A673 (cell line): ENCODE measurements at regions of chr6 and their contacts with region 1.

Region 1: GRCh38 chr6:127547215-127547614 is 28.1 kb upstream of the MTCL3 start:
- DNase-seq: peak; percentile 35
- H3K4me3 ChIP-seq: no peak overlapping the region
- H3K27ac ChIP-seq: no peak overlapping the region
- H3K4me1 ChIP-seq: no peaks in the 10 kb centered on the region
- H3K27me3 ChIP-seq: no peaks in the 10 kb centered on the region
- CTCF ChIP-seq: peak; percentile 53

Region 2: DNA sequence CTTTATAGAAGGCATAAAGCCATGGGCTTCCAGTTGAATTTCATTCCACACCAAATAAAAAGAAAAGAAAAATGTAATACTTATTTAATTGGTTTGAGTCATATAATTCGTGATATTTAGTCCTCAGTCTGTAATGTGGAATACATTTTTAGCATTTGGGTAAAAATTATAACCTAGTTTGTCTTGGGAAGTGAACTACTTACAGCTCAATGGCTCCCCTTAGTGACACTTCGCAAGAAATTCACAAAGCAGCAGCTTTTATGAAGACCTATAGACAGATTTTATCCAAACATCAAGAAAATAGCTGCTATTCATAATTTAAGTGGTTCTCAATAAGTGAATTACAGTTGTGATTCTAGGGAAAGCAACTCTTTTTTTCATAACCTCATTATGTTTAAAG is 356.7 kb before region 1 on chr6:
- CTCF ChIA-PET with region 1: no interaction called
- POLR2A ChIA-PET with region 1: no interaction called
- intact Hi-C with region 1: loop called (anchors 10 kb)
- DNase-seq: peak; percentile 54
- H3K4me3 ChIP-seq: no peak overlapping the region
- H3K27ac ChIP-seq: no peak overlapping the region
- H3K4me1 ChIP-seq: no peaks in the 10 kb centered on the region
- H3K27me3 ChIP-seq: no peaks in the 10 kb centered on the region
- CTCF ChIP-seq: peak; percentile 80

Region 3: GRCh38 chr6:127207591-127208120 is 339.6 kb before region 1 on chr6:
- CTCF ChIA-PET with region 1: no interaction called
- POLR2A ChIA-PET with region 1: no interaction called
- intact Hi-C with region 1: no loop called
- DNase-seq: peak; percentile 47
- H3K4me3 ChIP-seq: no peak overlapping the region
- H3K27ac ChIP-seq: no peak overlapping the region
- H3K4me1 ChIP-seq: peaks cover 17% of the 10 kb centered on the region
- H3K27me3 ChIP-seq: no peaks in the 10 kb centered on the region
- CTCF ChIP-seq: no peak